Astrocyte of the cerebellum (primary cell): ENCODE measurements at regions of chr18 and their contacts with region 1.

Region 1: GRCh38 chr18:8696749-8697211 is 8.6 kb upstream of the MTCL1 start:
- DNase-seq: no peak
- H3K4me3 ChIP-seq: no peak overlapping the region
- CTCF ChIP-seq: peak; percentile 94

Region 2: GRCh38 chr18:8595445-8595844 is 101.3 kb before region 1 on chr18:
- in situ Hi-C with region 1: no loop called
- DNase-seq: no peak
- H3K4me3 ChIP-seq: no peak overlapping the region
- CTCF ChIP-seq: no peak

Region 3: DNA sequence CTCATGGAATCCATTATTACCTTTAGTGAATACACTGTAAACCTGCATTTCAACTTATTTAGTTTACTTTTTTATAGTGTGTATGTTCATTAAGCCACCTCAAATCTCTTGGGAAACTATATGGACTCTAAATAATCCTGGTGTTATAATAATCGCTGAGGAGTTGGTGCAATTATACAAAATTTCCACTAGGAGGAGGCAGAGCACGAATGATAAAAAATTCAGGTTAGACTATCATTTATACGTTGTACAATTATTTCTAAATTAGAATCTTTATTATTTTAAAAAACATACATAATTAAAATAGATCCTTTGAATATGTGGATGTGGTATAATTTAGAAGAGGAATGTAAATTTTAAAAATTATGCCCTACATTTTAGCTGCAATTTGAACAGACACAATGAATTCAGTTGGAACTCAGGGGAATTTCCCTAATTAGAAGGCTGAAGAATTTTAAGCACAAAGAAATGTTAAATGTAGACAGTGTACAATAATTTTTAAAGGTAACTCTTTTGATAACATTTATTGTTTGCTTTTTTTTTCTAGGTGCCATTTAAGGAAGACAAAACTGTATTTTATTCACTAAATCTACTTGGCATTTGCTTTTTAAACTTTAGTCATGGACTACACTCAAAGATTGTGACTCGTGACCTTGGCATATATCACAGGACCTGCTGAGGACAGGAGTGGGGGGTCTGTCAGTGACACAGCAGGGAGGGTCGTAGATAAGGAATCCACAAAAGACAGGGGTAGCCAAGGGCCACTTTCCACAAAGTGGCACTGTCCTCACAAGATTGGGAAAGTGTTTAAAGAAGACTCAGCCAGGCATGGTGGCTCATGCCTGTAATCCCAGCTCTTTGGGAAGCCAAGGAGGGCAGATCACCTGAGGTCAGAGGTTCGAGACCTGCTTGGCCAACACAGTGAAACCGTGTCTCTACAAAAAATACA is 42.0 kb before region 1 on chr18:
- in situ Hi-C with region 1: loop called (anchors 5 kb)
- DNase-seq: peak; percentile 16
- H3K4me3 ChIP-seq: no peak overlapping the region
- CTCF ChIP-seq: peak; percentile 46

Region 4: DNA sequence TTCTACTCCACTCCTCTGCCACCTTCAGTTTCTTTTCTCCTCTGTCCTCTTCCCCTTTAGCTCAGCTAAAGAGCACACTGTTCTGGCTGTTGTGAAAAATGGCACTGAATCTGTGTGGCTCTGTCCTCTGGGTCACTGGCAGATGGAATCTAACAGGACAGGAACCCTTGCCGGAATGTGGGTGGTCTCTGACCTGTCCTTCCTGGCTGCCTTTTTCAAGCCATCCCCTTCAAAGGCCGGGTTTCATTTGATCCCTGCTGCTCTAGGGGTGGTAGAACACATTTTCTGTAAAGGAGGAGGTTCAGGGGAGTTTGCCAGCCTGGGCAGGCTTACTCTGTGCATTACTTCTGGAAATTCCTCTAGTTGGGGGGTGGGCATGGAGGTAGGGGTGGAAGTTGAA is 38.5 kb after region 1 on chr18:
- in situ Hi-C with region 1: no loop called
- DNase-seq: no peak
- H3K4me3 ChIP-seq: no peak overlapping the region
- CTCF ChIP-seq: no peak

Region 5: DNA sequence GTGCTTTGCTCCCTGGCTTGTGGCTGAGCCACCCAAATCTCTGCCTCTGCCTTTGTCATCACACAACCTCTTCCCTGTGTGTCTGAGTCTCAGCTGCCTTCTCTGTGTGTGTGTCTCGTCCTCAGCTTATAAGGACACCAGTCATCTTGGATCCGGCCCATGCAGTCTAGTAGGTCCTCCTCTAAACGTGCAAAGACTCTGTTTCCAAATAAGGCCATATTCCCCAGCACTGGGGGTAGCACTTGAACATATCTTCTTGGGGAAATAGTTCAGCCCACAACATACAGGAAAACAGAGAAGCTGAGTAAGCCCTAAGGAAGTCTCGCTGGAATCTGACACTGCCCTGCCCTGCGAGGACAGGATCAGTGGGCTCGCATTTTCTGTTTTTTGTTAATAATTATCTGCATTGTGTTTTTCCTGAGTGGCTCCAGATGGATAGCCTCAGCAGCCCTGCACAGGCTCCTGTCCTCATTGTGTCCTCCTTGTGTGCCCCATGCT is 50.7 kb after region 1 on chr18:
- in situ Hi-C with region 1: loop called (anchors 5 kb)
- DNase-seq: no peak
- H3K4me3 ChIP-seq: no peak overlapping the region
- CTCF ChIP-seq: no peak